Endothelial cell of umbilical vein (primary cell): ENCODE measurements at regions of chr20 and their contacts with region 1.

Region 1: DNA sequence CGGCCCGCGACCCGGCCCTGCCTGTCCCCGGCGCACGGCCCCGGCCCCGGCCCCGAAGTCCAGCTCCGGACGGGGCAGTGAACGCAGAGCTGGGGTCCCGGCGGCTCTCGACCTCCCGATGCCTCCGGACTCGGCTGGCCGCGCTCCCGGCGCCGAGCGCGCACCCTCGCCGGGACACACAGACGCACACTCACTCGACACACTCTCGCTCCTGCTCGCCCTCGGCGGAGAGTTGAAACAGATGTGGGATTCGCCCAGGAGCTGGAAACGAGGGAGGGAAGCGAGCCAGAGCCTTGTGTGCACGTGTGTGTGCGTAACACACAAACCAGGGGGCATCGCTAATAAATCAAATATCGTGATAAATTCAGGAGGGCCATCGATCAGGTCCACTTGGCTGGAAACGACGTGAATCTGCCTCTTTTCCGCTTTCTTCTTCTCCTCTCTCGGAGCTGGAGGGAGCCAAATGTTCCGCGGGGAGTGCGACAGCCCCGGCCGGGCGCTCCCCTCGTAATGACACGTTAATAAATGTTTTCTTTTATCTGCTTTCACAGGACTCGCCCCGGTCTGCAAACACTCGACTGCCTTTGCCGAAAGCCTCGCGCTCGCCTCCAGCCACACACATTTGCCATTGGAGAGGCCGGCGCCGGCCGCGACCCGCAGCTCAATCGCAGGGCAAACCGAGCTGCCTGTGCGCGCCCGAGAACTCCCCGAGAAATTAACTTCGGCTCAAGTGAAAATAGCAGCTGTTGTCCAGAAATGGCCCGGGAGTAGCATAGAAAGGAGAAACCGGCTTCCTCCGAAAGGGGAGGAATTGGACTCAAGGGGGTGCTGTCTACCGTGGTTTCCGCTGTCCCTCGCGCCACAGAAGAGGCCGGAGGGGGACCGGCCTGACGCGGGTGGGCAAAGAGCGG is 828 bp upstream of the SULF2 start:
- DNase-seq: peak; percentile 85
- H3K4me3 ChIP-seq: peak overlapping the region; percentile 19 to 60 (median 46)
- H3K27ac ChIP-seq: peak overlapping the region; percentile 22
- H3K4me1 ChIP-seq: peaks cover 22% of the 10 kb centered on the region
- H3K27me3 ChIP-seq: peaks cover 0 to 3% of the 10 kb centered on the region in 2 experiments
- CTCF ChIP-seq: peak; percentile 58 to 73
- POLR2A ChIP-seq: no peak

Region 2: GRCh38 chr20:47677635-47678453 is 108.3 kb before region 1 on chr20:
- CTCF ChIA-PET with region 1: interaction called, 5 read pairs
- POLR2A ChIA-PET with region 1: no interaction called
- dilution Hi-C with region 1: no loop called
- intact Hi-C with region 1: loop called (anchors 2 kb)
- DNase-seq: peak; percentile 43
- H3K4me3 ChIP-seq: no peak overlapping the region
- H3K27ac ChIP-seq: no peak overlapping the region
- H3K4me1 ChIP-seq: no peaks in the 10 kb centered on the region
- H3K27me3 ChIP-seq: no peaks in the 10 kb centered on the region
- CTCF ChIP-seq: peak; percentile 75 to 92
- POLR2A ChIP-seq: no peak

Region 3: DNA sequence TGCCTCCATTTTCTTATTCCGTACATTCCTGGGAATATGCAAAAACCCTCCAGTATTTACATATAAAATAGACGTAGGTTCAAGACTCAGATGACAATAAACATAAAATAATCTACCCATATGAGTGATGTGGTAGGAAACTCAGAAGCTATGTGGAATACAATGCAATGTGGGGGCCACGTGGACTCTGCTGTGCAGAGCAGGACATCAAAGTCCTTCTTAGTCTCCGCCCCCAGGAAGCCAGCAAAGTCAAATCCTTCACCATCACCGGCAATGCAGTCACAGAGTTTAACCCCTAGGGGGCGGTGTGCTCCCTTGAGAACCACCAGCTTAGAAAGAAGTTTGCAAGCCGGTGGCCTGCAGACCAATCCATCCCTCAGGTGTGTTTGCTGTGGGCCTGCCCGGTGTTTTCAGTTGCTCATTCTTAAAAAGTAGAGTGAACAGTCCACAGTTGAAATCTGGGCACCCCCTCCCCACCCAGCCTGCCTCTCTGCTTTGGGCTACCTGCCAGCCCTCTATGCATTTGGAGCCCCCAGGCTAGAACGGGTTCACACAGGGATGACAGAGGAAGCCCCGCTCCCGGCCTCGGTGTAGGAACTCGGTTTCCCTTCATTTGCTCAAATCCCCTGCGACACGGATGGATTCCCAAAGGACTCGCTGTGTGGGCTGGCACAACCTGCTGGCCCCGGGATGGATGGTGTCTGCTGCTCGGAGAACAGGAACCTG is 60.7 kb before region 1 on chr20:
- CTCF ChIA-PET with region 1: interaction called, 18 read pairs
- POLR2A ChIA-PET with region 1: no interaction called
- dilution Hi-C with region 1: no loop called
- intact Hi-C with region 1: loop called (anchors 1 kb)
- DNase-seq: peak; percentile 90
- H3K4me3 ChIP-seq: no peak overlapping the region
- H3K27ac ChIP-seq: no peak overlapping the region
- H3K4me1 ChIP-seq: no peaks in the 10 kb centered on the region
- H3K27me3 ChIP-seq: no peaks in the 10 kb centered on the region
- CTCF ChIP-seq: peak; percentile 90 to 91
- POLR2A ChIP-seq: no peak

Region 4: DNA sequence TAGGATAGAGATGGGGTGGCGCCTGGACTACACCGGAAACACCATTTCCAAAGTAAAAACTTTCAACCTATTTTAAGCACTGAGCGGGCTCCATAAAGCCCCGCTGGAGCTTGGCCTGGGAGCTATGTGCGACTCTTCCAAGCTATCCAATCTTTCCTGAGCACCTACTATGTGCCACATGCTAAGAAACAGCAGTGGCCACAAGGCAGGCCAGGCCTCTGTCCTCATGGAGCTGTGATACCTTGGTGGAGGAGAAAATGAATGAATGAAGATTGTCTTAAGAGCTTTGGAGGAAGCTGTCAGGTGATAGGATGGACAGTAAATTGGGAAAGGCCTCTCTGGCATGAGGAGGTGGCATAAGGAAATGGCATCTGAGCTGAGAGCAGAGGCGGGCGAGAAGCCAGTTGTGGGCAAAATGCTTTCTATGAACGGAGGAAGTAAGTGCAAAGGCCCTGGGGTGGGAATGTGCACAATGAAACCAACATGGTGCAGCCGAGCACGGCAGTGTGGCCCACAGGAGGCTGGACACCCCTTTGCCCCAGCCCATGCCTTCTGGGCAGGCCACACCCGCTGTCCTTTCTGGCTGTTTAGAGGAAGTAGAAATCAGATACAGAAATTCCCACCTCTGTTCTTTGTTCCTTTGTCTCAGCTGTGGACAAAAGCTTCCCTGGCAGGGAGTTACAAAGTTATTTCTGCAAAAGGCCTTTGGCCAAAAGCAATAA is 13.0 kb before region 1 on chr20:
- CTCF ChIA-PET with region 1: interaction called, 9 read pairs
- POLR2A ChIA-PET with region 1: no interaction called
- dilution Hi-C with region 1: no loop called
- intact Hi-C with region 1: loop called (anchors 1 kb)
- DNase-seq: peak; percentile 78
- H3K4me3 ChIP-seq: no peak overlapping the region
- H3K27ac ChIP-seq: peak overlapping the region; percentile 42
- H3K4me1 ChIP-seq: peaks cover 14% of the 10 kb centered on the region
- H3K27me3 ChIP-seq: peaks cover 0 to 3% of the 10 kb centered on the region in 2 experiments
- CTCF ChIP-seq: no peak
- POLR2A ChIP-seq: no peak

Region 5: DNA sequence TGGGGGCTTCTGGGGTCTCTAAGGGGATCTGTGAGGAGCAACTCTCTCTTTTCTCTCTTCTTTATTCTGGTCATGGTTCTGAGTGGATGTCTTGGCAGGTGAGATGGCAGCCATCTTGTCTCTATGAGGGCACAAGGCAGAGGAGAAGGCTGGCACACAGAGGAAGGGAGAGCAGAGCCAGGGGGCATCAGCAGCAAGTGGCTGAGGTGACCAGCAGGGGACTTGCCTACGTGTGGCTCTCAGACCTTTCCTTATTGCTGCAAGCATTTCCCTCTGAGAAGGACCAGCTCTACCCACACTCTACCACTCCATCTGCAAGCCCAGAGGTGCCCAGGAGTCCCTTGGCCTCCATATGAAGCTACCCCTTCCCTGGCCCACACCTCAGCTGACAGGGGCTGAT is 91.9 kb after region 1 on chr20:
- CTCF ChIA-PET with region 1: interaction called, 5 read pairs
- POLR2A ChIA-PET with region 1: no interaction called
- dilution Hi-C with region 1: no loop called
- intact Hi-C with region 1: loop called (anchors 1 kb)
- DNase-seq: no peak
- H3K4me3 ChIP-seq: no peak overlapping the region
- H3K27ac ChIP-seq: peak overlapping the region; percentile 84
- H3K4me1 ChIP-seq: peaks cover 47% of the 10 kb centered on the region
- H3K27me3 ChIP-seq: no peaks in the 10 kb centered on the region
- CTCF ChIP-seq: peak in 1 of 2 donors; percentile 33
- POLR2A ChIP-seq: no peak

Region 6: GRCh38 chr20:48215291-48215928 is 429.3 kb after region 1 on chr20:
- CTCF ChIA-PET with region 1: no interaction called
- POLR2A ChIA-PET with region 1: no interaction called
- dilution Hi-C with region 1: no loop called
- intact Hi-C with region 1: no loop called
- DNase-seq: no peak
- H3K4me3 ChIP-seq: no peak overlapping the region
- H3K27ac ChIP-seq: no peak overlapping the region
- H3K4me1 ChIP-seq: no peaks in the 10 kb centered on the region
- H3K27me3 ChIP-seq: no peaks in the 10 kb centered on the region
- CTCF ChIP-seq: no peak
- POLR2A ChIP-seq: no peak

Region 7: DNA sequence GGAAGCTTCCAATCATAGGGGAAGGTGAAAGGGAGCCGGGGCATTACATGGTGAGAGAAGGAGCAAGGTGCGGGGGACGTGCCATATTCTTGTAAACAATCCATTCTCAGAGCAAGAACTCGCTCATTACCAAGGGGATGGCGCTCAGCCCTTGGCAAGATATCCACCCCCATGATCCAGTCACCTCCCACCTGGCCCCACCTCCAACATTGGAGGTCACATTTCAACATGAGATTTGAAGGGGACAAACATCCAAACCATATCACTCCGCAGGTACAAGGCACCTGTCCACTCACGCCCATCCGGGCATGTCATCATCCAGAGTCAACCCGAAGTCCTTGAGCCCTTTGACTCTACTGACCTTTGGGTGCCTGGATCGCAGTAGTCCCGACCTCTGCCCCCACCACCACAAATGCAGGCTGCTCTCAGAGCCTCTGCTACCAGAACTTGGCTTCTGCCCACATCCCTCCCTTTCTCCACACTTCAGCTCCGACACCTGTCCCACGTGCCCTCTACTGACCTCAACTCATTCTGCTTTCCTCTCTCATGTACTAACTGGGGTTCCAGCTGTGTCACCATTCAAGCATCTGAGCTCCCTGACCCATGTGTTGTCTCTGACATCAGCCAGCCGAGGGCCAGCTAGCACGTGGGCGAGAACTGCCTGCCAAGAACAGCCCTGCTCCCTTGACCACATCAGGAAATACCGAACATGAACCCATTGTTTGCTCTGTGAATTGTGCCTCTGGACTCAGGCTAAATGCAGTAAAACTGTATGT is 497.4 kb after region 1 on chr20:
- CTCF ChIA-PET with region 1: interaction called, 3 read pairs
- POLR2A ChIA-PET with region 1: no interaction called
- dilution Hi-C with region 1: no loop called
- intact Hi-C with region 1: loop called (anchors 5 kb)
- DNase-seq: peak; percentile 99
- H3K4me3 ChIP-seq: no peak overlapping the region
- H3K27ac ChIP-seq: peak overlapping the region; percentile 68
- H3K4me1 ChIP-seq: peaks cover 55% of the 10 kb centered on the region
- H3K27me3 ChIP-seq: no peaks in the 10 kb centered on the region
- CTCF ChIP-seq: no peak
- POLR2A ChIP-seq: no peak

Region 8: DNA sequence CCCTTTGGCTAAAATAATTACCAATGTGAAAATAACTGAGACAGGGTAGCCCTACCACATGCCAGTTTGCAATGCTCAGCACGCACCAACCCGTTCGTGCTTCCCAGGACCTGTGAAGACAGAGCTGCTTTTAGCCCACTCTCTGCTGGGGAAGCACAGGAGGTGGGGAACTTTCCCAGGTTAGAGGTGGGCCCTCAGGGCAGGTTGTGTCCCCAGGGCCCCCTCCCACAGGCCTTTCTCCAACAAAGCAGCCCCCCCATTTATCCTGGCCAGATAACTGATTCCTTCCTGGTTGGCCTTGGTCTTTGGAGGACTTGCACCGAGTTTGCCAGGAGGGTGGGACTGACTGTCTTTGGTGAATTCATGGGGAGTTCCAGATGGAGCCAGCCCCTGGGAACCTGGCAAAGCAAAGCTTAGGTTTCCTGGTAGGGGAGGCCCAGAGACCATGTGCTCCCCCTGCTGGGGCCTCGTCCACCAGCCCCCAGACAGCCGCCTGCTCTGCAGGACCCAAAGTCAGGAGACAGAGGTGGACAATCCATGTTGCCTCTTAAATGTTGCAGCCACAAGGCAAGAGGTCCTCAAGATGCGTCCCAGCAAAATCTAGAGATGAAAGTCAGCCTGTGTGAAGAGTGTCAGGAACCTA is 543.6 kb after region 1 on chr20:
- CTCF ChIA-PET with region 1: interaction called, 11 read pairs
- POLR2A ChIA-PET with region 1: no interaction called
- dilution Hi-C with region 1: no loop called
- intact Hi-C with region 1: loop called (anchors 2 kb)
- DNase-seq: peak; percentile 38
- H3K4me3 ChIP-seq: no peak overlapping the region
- H3K27ac ChIP-seq: no peak overlapping the region
- H3K4me1 ChIP-seq: no peaks in the 10 kb centered on the region
- H3K27me3 ChIP-seq: peaks cover 9 to 13% of the 10 kb centered on the region in 2 experiments
- CTCF ChIP-seq: peak; percentile 47 to 72
- POLR2A ChIP-seq: no peak